ENCODE measurements at regions of chr20 and their contacts with region 1.

Region 1: GRCh38 chr20:40738976-40739375 is 49.9 kb upstream of the MAFB start:
- DNase-seq: no peak
- H3K4me3 ChIP-seq: no peak overlapping the region
- H3K27ac ChIP-seq: no peak overlapping the region
- H3K4me1 ChIP-seq: no peaks in the 10 kb centered on the region
- H3K27me3 ChIP-seq: peaks cover 0 to 25% of the 10 kb centered on the region in 2 donors
- CTCF ChIP-seq: no peak

Region 2: DNA sequence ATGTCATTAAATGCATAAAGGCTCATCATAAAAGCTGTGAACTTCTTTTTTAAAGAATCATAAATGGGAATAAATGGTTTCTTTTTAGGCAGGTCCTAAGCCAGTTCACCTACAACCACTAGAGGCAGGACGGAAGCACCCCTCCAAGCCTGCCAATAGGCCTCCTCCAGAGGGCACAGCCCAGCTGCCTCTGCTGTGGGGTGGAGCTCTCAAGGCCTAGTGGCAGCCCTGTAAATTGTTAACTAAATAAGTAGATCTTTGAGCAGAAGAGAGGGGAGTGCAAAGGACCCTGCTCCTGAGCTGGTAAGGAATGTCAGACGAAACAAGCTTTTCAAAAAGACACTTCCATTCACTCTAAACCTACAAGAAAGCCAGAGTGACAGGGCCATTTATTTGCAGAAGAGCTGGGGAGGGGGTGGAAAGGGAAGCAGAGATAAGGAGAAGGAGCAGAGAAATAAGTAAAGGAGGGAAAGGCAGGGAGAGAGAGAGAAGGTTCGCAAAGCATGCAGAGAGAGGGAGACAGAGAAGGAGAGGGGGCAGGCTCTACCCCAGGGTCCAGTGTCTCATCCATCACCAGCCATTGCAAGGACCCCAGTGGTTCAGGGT is 31.9 kb before region 1 on chr20:
- intact Hi-C with region 1: no loop called
- DNase-seq: no peak
- H3K4me3 ChIP-seq: no peak overlapping the region
- H3K27ac ChIP-seq: no peak overlapping the region
- H3K4me1 ChIP-seq: no peaks in the 10 kb centered on the region
- H3K27me3 ChIP-seq: peaks cover 0 to 7% of the 10 kb centered on the region in 2 donors
- CTCF ChIP-seq: no peak

Region 3: GRCh38 chr20:40945754-40946450 is 206.9 kb after region 1 on chr20:
- intact Hi-C with region 1: loop called (anchors 5 kb)
- DNase-seq: peak; percentile 56 to 73
- H3K4me3 ChIP-seq: no peak overlapping the region
- H3K27ac ChIP-seq: no peak overlapping the region
- H3K4me1 ChIP-seq: no peaks in the 10 kb centered on the region
- H3K27me3 ChIP-seq: peaks cover 0 to 12% of the 10 kb centered on the region in 2 donors
- CTCF ChIP-seq: peak; percentile 46 to 61